Activated naive CD4-positive, alpha-beta T cell treated with anti-CD3 and anti-CD28 coated beads for 36 hours (primary cell): ENCODE measurements at regions of chr3 and their contacts with region 1.

Region 1: GRCh38 chr3:196198771-196199753 is 12.1 kb downstream of the ZDHHC19 start:
- DNase-seq: no peak
- H3K4me3 Mint-ChIP-seq: no peak overlapping the region
- H3K27ac Mint-ChIP-seq: no peak overlapping the region
- H3K4me1 Mint-ChIP-seq: peaks cover 7% of the 10 kb centered on the region
- H3K27me3 Mint-ChIP-seq: no peaks in the 10 kb centered on the region

Region 2: GRCh38 chr3:195863121-195864006 is 335.7 kb before region 1 on chr3:
- CTCF ChIA-PET with region 1: no interaction called
- intact Hi-C with region 1: loop called (anchors 5 kb)
- DNase-seq: peak; percentile 79
- H3K4me3 Mint-ChIP-seq: no peak overlapping the region
- H3K27ac Mint-ChIP-seq: peak overlapping the region; percentile 36
- H3K4me1 Mint-ChIP-seq: peaks cover 8% of the 10 kb centered on the region
- H3K27me3 Mint-ChIP-seq: no peaks in the 10 kb centered on the region

Region 3: GRCh38 chr3:196020373-196020772 is 178.7 kb before region 1 on chr3:
- CTCF ChIA-PET with region 1: interaction called, 8 read pairs
- intact Hi-C with region 1: loop called (anchors 1 kb)
- DNase-seq: no peak
- H3K4me3 Mint-ChIP-seq: no peak overlapping the region
- H3K27ac Mint-ChIP-seq: no peak overlapping the region
- H3K4me1 Mint-ChIP-seq: no peaks in the 10 kb centered on the region
- H3K27me3 Mint-ChIP-seq: peaks cover 2% of the 10 kb centered on the region

Region 4: DNA sequence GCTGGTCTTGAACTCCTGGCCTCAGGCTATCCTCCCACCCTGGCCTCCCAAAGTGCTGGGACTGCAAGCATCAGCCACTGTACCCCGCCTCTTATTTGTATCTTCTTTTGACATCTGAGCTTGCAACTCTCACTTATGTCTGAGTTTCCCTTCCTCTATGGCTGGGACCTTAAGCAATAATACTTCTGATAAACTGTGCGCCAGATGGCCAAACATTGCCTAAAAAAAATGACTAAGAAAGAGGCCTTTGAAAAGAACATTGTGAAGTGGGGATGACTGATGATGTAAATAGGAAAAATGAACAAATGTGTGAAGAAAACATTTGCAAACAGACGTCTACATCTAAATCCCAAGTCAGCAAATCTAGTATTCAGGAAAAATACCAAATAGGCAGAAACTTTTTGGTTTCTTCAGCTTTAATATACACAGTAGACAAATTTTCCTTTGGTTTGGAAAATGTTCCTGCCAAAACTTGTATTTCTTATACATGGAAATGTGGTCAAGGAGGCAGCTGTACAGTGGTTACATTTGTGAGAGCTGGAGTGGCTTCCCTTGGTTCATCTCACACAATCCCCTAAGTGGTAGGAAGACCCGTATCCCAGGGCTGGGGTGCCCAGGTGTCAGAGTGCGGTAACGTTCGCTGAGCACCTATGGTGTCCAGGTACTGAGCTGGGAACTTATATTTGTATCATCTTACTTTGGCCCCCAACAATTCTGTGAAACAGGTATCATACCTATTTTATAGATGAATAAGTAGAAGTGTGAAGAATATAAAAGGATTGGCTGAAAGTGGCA is 105.5 kb before region 1 on chr3:
- CTCF ChIA-PET with region 1: interaction called, 12 read pairs
- intact Hi-C with region 1: no loop called
- DNase-seq: no peak
- H3K4me3 Mint-ChIP-seq: no peak overlapping the region
- H3K27ac Mint-ChIP-seq: no peak overlapping the region
- H3K4me1 Mint-ChIP-seq: peaks cover 11% of the 10 kb centered on the region
- H3K27me3 Mint-ChIP-seq: no peaks in the 10 kb centered on the region

Region 5: GRCh38 chr3:196186651-196187573 is 12.2 kb before region 1 on chr3:
- CTCF ChIA-PET with region 1: interaction called, 14 read pairs
- intact Hi-C with region 1: no loop called
- DNase-seq: peak; percentile 46
- H3K4me3 Mint-ChIP-seq: peak overlapping the region; percentile 24
- H3K27ac Mint-ChIP-seq: no peak overlapping the region
- H3K4me1 Mint-ChIP-seq: peaks cover 42% of the 10 kb centered on the region
- H3K27me3 Mint-ChIP-seq: no peaks in the 10 kb centered on the region

Region 6: DNA sequence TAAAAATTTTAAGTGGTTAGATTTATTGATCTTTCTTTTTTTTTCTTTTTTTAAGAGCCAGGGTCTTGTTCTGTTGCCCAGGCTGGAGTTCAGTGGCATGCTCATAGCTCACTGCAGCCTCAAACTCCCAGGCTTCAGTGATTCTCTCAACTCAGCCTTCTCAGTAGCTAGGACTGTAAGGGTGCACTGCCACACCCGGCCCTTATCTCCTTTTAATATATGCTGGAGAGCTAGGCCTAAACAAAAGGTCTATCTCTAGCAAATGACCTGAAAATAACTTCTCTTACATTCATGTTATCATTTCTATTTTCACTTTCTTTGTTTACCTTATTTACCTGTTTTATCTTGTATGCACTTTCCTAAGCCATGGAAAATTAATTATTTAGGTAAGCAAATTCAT is 865.7 kb after region 1 on chr3:
- CTCF ChIA-PET with region 1: no interaction called
- intact Hi-C with region 1: no loop called
- DNase-seq: no peak
- H3K4me3 Mint-ChIP-seq: no peak overlapping the region
- H3K27ac Mint-ChIP-seq: no peak overlapping the region
- H3K4me1 Mint-ChIP-seq: no peaks in the 10 kb centered on the region
- H3K27me3 Mint-ChIP-seq: no peaks in the 10 kb centered on the region